Activated CD8-positive, alpha-beta T cell treated with anti-CD3 and anti-CD28 coated beads, Interleukin-2, amount 10 ng/mL, durations not matched to agents 7 days and 5 days (primary cell): ENCODE measurements at regions of chr10 and their contacts with region 1.

Region 1: GRCh38 chr10:124732931-124733570 is 11.1 kb downstream of the FAM53B start:
- DNase-seq: no peak
- ATAC-seq: peak; percentile 46
- H3K4me3 Mint-ChIP-seq: peak overlapping the region; percentile 12
- H3K27ac Mint-ChIP-seq: peak overlapping the region; percentile 64
- H3K4me1 Mint-ChIP-seq: peaks cover 88% of the 10 kb centered on the region
- H3K27me3 Mint-ChIP-seq: no peaks in the 10 kb centered on the region

Region 2: DNA sequence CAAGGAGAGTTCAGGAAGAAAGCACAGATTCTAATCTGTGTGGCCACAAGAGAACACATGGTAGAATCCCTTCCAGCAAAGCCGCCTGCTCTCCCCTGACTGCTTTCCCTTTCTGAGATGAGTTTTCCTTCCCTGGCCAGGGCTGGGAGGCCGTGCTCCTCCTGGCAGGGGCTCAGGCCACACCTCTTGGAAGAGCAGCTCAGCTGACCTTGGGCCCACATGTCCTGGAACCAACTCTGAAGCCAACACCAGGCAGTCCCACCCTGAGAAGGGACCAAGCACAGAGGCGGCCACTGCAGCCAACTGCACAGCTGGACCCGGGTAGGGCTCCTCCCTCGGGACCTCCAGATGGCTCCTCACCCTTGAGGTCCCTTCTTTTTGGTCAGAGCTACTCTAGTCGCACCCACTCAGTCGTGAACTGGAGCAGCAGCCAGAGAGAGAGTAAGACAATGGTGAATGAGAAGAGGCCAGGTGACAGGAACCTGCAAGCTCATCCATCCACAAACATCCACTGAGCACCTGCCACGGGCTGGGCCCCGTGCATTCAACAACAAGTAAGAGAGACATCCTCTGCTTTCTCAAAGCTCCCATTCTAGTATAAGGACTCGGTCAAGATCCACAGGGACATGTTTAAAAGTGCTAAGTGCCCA is 29.1 kb before region 1 on chr10:
- CTCF ChIA-PET with region 1: interaction called, 13 read pairs
- POLR2A ChIA-PET with region 1: interaction called, 6 read pairs
- DNase-seq: no peak
- ATAC-seq: no peak
- H3K4me3 Mint-ChIP-seq: no peak overlapping the region
- H3K27ac Mint-ChIP-seq: peak overlapping the region; percentile 86
- H3K4me1 Mint-ChIP-seq: peaks cover 88% of the 10 kb centered on the region
- H3K27me3 Mint-ChIP-seq: no peaks in the 10 kb centered on the region